ENCODE measurements at regions of chr1 and their contacts with region 1.

Region 1: GRCh38 chr1:117895482-117896114 is 33.8 kb downstream of the GDAP2 start:
- DNase-seq: peak in 2 of 3 donors; percentile 46 to 57
- ATAC-seq: peak in 1 of 2 donors; percentile 23
- H3K4me3 ChIP-seq: no peak overlapping the region
- H3K27ac ChIP-seq: no peak overlapping the region
- H3K4me1 ChIP-seq: peaks cover 2% of the 10 kb centered on the region
- H3K27me3 ChIP-seq: no peaks in the 10 kb centered on the region

Region 2: DNA sequence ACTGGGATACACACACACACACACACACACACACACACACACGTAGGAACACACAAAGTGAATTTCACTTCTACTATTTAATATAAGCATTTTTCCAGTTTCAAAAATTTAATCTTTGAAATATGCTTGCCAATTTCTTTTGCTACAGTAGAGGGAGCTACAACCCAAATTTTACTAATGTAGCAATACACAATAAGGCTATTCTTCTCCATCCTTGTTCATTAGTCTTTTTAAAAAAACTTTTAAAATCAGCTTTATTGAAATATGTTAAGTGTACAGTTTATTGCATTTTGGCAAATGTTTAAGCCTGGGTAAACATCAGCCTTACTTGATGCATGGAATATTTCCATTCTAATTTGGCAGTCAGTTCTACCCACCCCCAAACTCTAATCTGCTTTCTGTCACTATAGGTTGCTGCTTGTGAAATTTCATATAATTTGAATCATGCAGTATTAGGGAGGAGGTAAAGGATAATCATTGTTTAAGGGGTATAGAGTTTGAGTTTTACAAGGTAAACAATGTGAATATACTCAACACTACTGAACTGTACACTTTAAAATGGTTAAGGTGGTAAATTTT is 382.8 kb before region 1 on chr1:
- intact Hi-C with region 1: loop called in 2 of 4 experiments (anchors 10 kb)
- DNase-seq: no peak
- ATAC-seq: no peak
- H3K4me3 ChIP-seq: no peak overlapping the region
- H3K27ac ChIP-seq: no peak overlapping the region
- H3K4me1 ChIP-seq: no peaks in the 10 kb centered on the region
- H3K27me3 ChIP-seq: no peaks in the 10 kb centered on the region

Region 3: DNA sequence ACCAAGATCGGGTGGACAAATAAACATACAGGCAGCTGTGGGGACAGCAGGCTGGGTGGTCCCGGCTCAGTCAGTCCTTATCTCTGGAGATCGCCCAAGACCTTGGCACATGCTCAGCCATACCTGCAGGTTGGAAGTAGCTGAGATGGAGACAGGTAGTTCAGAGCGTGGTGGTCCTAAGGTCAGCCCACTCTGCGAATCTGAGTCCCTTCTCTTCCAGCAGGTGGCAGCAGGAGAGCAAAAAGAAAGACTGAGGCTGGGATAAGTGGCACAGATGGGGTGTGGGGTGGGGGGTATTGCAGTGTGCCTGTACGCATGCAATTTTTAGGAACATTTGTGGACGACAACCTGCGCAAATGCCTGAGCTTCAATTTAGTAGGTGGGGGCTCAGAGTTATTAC is 184.9 kb before region 1 on chr1:
- intact Hi-C with region 1: no loop called
- DNase-seq: no peak
- ATAC-seq: no peak
- H3K4me3 ChIP-seq: no peak overlapping the region
- H3K27ac ChIP-seq: no peak overlapping the region
- H3K4me1 ChIP-seq: no peaks in the 10 kb centered on the region
- H3K27me3 ChIP-seq: no peaks in the 10 kb centered on the region

Region 4: DNA sequence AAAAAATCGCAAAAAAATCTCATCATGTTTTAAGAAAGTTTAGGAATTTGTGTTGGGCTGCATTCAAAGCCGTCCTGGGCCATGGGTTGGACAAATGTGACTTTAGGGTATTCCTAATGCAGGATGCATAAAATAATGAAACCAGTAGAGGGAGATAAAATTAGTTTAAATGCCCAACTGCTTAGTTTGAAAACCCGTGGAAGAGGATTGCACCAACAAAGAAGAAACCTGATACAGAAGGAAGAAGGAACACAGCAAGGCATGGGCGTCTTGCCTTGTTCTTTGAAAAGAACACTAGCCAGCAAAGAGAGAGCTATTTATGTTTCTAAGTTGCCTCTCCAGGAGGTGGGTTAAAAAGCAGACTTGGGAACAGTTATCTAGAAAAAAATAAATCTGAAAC is 71.9 kb after region 1 on chr1:
- intact Hi-C with region 1: no loop called
- DNase-seq: no peak
- ATAC-seq: no peak
- H3K4me3 ChIP-seq: no peak overlapping the region
- H3K27ac ChIP-seq: no peak overlapping the region
- H3K4me1 ChIP-seq: no peaks in the 10 kb centered on the region
- H3K27me3 ChIP-seq: no peaks in the 10 kb centered on the region

Measured in right cardiac atrium (tissue), 5 donors.